AG04450 (cell line): ENCODE measurements at regions of chr12 and their contacts with region 1.

Region 1: GRCh38 chr12:120429368-120429767 is 8.5 kb upstream of the COX6A1 start:
- DNase-seq: no peak
- H3K4me3 ChIP-seq: no peak overlapping the region
- H3K27ac ChIP-seq: no peak overlapping the region
- H3K27me3 ChIP-seq: peaks cover 2% of the 10 kb centered on the region
- CTCF ChIP-seq: no peak

Region 2: DNA sequence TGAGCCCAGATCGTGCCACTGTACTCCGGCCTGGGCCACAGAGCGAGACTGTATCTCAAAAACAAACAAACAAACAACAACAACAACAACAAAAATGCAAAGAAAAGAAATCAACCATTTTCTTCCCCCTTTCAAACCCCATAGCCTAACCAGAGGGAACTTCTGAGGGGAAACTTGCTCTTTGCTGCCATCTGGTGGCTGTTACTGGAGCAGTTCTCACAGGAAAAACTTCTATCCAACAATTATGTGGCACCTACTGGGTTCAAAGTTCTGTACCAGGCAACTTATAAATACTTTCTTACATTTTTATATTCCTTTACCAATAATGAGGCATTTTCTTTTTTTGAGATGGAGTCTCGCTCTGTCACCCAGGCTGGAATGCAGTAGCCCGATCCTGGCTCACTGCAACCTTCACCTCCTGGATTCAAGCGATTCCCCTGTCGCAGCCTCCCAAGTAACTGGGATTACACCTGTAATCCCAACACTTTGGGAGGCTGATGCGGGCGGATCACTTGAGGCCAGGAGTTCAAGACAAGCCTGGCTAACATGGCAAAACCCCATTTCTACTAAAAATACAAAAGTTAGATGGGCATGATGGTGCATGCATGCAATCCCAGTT is 491.2 kb before region 1 on chr12:
- CTCF ChIA-PET with region 1: no interaction called
- POLR2A ChIA-PET with region 1: no interaction called
- DNase-seq: peak; percentile 10
- H3K4me3 ChIP-seq: no peak overlapping the region
- H3K27ac ChIP-seq: no peak overlapping the region
- H3K27me3 ChIP-seq: peaks cover 3% of the 10 kb centered on the region
- CTCF ChIP-seq: peak; percentile 88

Region 3: GRCh38 chr12:120361506-120362208 is 67.7 kb before region 1 on chr12:
- CTCF ChIA-PET with region 1: interaction called, 82 read pairs
- POLR2A ChIA-PET with region 1: no interaction called
- DNase-seq: peak; percentile 21
- H3K4me3 ChIP-seq: peak overlapping the region; percentile 39; the same call in 1 of the 2 replicates
- H3K27ac ChIP-seq: no peak overlapping the region
- H3K27me3 ChIP-seq: peaks cover 62% of the 10 kb centered on the region
- CTCF ChIP-seq: no peak

Region 4: GRCh38 chr12:120453977-120454376 is 24.6 kb after region 1 on chr12:
- CTCF ChIA-PET with region 1: no interaction called
- POLR2A ChIA-PET with region 1: no interaction called
- DNase-seq: no peak
- H3K4me3 ChIP-seq: no peak overlapping the region
- H3K27ac ChIP-seq: no peak overlapping the region
- H3K27me3 ChIP-seq: no peaks in the 10 kb centered on the region
- CTCF ChIP-seq: peak; percentile 69

Region 5: GRCh38 chr12:121181181-121181580 is 751.8 kb after region 1 on chr12:
- CTCF ChIA-PET with region 1: no interaction called
- POLR2A ChIA-PET with region 1: no interaction called
- DNase-seq: no peak
- H3K4me3 ChIP-seq: no peak overlapping the region
- H3K27ac ChIP-seq: no peak overlapping the region
- H3K27me3 ChIP-seq: no peaks in the 10 kb centered on the region
- CTCF ChIP-seq: no peak